ENCODE measurements at regions of chr20 and their contacts with region 1.

Region 1: GRCh38 chr20:63103402-63104309 is 96.9 kb upstream of the BHLHE23 start:
- H3K4me3 ChIP-seq: no peak overlapping the region
- H3K27ac ChIP-seq: no peak overlapping the region
- H3K4me1 ChIP-seq: no peaks in the 10 kb centered on the region; the same call in 1 of the 2 replicates
- CTCF ChIP-seq: no peak

Region 2: GRCh38 chr20:63321136-63321831 is 217.6 kb after region 1 on chr20:
- CTCF ChIA-PET with region 1: no interaction called
- POLR2A ChIA-PET with region 1: interaction called, 11 read pairs
- H3K4me3 ChIP-seq: no peak overlapping the region
- H3K27ac ChIP-seq: no peak overlapping the region
- H3K4me1 ChIP-seq: no peaks in the 10 kb centered on the region
- CTCF ChIP-seq: no peak